Activated CD4-positive, alpha-beta T cell treated with anti-CD3 and anti-CD28 coated beads for 36 hours (primary cell): ENCODE measurements at regions of chrX and their contacts with region 1.

Region 1: DNA sequence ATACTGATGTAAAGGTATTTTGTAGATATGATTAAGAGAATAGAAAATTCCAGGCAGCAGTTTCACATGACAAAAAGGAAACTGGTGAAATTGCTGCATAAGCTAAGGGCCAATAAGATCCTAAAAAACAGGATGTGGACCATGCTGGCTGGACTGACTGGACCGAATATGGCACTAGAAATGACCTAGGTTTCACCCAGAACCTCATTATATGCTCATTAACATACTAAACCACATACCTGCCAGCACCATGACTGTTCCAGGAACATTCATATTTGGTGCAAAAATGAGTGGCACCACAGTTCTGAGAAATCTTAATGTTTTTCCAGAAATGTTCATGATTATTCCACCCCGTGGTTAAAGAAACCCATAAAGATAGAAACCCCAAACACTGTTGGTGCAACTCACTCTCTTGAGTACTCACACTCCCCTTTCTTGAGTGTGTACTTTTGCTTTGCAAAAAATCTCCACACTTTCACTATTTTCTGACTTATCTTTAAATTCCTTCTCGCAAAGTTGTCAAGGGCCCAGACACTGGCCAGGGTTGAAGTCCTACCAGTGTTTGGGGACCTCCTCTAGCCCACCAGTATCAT is 74.0 kb downstream of the FANCB start:
- DNase-seq: peak; percentile 14
- ATAC-seq: peak; percentile 83
- H3K4me3 Mint-ChIP-seq: no peak overlapping the region
- H3K27ac Mint-ChIP-seq: no peak overlapping the region
- H3K4me1 Mint-ChIP-seq: peaks cover 22% of the 10 kb centered on the region
- H3K27me3 Mint-ChIP-seq: peaks cover 2% of the 10 kb centered on the region

Region 2: GRCh38 chrX:14779589-14779988 is 19.3 kb before region 1 on chrX:
- CTCF ChIA-PET with region 1: no interaction called
- POLR2A ChIA-PET with region 1: no interaction called
- intact Hi-C with region 1: no loop called
- DNase-seq: no peak
- ATAC-seq: no peak
- H3K4me3 Mint-ChIP-seq: no peak overlapping the region
- H3K27ac Mint-ChIP-seq: no peak overlapping the region
- H3K4me1 Mint-ChIP-seq: no peaks in the 10 kb centered on the region
- H3K27me3 Mint-ChIP-seq: no peaks in the 10 kb centered on the region

Region 3: DNA sequence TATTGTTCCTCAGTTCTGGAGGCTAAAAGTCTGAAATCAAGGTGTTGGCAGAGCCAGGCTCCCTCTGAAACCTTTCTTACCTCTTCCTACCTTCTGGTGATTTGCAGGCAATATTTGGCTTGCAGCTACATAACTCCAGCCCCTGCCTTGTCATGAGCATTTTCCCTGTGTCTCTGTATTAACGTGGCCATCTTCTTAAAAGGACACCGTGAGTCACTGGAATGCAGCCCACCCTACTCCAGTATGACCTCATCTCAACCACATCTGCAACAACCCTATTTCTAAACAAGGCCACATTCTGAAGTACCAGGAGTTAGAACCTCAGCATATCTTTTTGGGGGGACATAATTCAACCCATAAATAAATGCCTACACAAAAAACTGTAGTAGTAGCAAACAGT is 33.2 kb after region 1 on chrX:
- CTCF ChIA-PET with region 1: no interaction called
- POLR2A ChIA-PET with region 1: no interaction called
- intact Hi-C with region 1: no loop called
- DNase-seq: no peak
- ATAC-seq: no peak
- H3K4me3 Mint-ChIP-seq: no peak overlapping the region
- H3K27ac Mint-ChIP-seq: no peak overlapping the region
- H3K4me1 Mint-ChIP-seq: no peaks in the 10 kb centered on the region
- H3K27me3 Mint-ChIP-seq: no peaks in the 10 kb centered on the region

Region 4: DNA sequence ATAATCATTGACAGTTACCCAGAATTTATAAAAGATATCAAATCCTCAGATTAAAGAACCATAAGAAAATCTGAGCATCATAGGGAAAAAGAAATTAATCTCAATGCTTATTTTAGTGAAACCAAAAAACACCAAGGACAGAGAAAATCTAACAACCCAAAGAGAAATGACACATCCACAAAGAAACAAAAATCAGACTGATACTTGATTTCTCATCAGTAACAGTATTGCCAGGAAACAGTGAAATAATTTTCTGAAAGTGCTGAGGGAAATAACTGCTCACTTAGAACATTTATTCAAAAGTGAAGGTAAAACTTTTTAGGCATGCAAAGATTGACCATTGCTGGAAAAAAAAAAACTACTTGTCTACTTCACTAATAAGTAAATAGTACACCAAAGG is 84.9 kb after region 1 on chrX:
- CTCF ChIA-PET with region 1: no interaction called
- POLR2A ChIA-PET with region 1: interaction called, 3 read pairs
- intact Hi-C with region 1: loop called in 1 of 2 experiments (anchors 5 kb)
- DNase-seq: no peak
- ATAC-seq: peak; percentile 57
- H3K4me3 Mint-ChIP-seq: peak overlapping the region; percentile 35
- H3K27ac Mint-ChIP-seq: peak overlapping the region; percentile 93
- H3K4me1 Mint-ChIP-seq: peaks cover 48% of the 10 kb centered on the region
- H3K27me3 Mint-ChIP-seq: no peaks in the 10 kb centered on the region

Region 5: GRCh38 chrX:15151267-15152186 is 352.6 kb after region 1 on chrX:
- CTCF ChIA-PET with region 1: no interaction called
- POLR2A ChIA-PET with region 1: no interaction called
- intact Hi-C with region 1: loop called (anchors 5 to 10 kb)
- DNase-seq: peak; percentile 56
- ATAC-seq: peak; percentile 92
- H3K4me3 Mint-ChIP-seq: no peak overlapping the region
- H3K27ac Mint-ChIP-seq: peak overlapping the region; percentile 70
- H3K4me1 Mint-ChIP-seq: peaks cover 16% of the 10 kb centered on the region
- H3K27me3 Mint-ChIP-seq: peaks cover 14% of the 10 kb centered on the region

Region 6: GRCh38 chrX:15202454-15203143 is 403.7 kb after region 1 on chrX:
- CTCF ChIA-PET with region 1: no interaction called
- POLR2A ChIA-PET with region 1: no interaction called
- intact Hi-C with region 1: loop called (anchors 2 kb)
- DNase-seq: no peak
- ATAC-seq: peak; percentile 45
- H3K4me3 Mint-ChIP-seq: no peak overlapping the region
- H3K27ac Mint-ChIP-seq: no peak overlapping the region
- H3K4me1 Mint-ChIP-seq: peaks cover 42% of the 10 kb centered on the region
- H3K27me3 Mint-ChIP-seq: peaks cover 8% of the 10 kb centered on the region

Region 7: DNA sequence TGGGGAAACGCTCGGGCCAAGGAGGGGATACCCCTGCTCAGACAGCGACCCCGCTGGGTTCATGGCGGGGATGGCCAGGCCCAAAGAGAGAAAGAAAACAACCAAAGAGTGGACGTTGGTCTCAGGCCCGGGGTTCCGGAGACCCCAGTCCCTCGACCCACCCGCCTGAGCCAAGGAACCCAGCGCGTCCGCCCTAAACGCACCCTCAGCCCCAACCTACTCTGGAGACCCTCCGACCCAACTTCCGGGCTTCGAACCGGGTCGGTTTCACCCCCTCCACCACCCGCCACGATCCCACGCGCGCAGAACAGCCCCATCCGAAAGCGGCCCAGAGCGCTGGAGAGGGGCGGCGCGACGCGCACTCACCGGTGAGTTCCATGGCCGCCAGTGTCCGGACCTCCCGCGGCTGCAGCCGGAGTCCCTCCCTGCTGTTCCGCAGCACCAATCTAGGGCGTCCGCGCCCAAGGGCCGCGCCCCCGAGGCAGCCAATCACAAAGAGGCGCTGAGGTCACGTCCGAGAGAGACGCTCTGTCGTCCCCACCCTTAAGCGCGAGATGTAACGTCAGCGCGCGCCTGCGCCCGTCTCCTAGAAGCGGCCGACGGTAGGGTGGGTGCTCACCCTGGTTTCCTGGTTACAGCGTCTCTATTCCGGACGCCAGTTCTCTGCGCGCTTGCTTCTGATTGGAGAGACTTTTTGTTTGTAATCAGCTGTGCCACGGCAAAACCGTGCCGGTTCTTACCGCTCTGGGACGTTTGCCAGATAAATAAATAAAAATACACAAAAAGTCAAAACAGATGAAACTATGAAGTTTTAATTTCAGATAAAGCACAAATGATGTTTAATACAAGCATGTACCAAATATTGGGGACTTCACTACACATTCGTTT is 536.5 kb after region 1 on chrX and contains the start of gene PIGA:
- CTCF ChIA-PET with region 1: no interaction called
- POLR2A ChIA-PET with region 1: no interaction called
- intact Hi-C with region 1: loop called in 1 of 2 experiments (anchors 5 kb)
- DNase-seq: peak; percentile 94
- ATAC-seq: peak; percentile 97
- H3K4me3 Mint-ChIP-seq: peak within 1 kb of the TSS; percentile 84
- H3K27ac Mint-ChIP-seq: peak within 1 kb of the TSS; percentile 91
- H3K4me1 Mint-ChIP-seq: peaks cover 14% of the 10 kb centered on the region
- H3K27me3 Mint-ChIP-seq: peaks cover 4% of the 10 kb centered on the region
- total RNA-seq, gene PIGA: 37.2 to 37.9 TPM